Posterior cingulate gyrus (tissue), 11 donors: ENCODE measurements at regions of chr16 and their contacts with region 1.

Region 1: DNA sequence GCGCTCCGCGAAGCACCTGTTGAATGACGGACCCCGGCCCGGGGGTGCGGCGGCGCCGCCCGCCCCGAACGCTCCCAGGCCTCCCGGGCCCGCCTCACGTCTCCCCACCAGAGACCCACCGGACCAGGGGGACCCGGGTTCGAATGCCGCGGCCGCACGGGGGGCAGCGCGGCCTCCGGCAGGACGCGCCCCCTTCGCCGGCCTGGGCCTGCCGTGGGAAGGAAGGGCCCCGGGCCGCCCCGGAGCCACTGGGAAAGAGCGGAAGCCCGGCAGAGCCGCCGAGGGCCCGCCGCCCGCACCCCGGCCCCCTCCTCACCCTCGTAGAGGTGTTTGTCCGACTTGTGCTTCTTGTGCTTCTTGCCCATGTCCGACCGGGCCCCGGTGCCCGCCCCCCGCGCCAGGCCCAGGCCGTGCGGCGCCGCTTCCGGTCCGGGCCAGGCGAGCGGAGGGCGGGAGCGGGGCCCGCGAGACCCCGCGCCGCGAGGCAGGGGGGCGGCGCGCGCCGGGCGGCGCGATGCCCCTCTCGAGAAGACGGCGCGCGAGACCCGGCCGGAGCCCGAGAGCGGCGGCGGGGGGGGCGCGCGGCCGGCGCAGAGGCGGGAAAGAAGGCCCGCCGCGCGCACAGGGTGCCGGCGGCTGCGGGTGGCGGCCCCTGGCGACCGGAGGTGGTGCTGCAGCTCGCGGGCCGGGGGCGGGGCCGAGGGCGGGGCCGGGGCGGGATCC is at the start of gene BRD7:
- DNase-seq: peak in 9 of 10 donors; percentile 34 to 93 (median 59)

Region 2: DNA sequence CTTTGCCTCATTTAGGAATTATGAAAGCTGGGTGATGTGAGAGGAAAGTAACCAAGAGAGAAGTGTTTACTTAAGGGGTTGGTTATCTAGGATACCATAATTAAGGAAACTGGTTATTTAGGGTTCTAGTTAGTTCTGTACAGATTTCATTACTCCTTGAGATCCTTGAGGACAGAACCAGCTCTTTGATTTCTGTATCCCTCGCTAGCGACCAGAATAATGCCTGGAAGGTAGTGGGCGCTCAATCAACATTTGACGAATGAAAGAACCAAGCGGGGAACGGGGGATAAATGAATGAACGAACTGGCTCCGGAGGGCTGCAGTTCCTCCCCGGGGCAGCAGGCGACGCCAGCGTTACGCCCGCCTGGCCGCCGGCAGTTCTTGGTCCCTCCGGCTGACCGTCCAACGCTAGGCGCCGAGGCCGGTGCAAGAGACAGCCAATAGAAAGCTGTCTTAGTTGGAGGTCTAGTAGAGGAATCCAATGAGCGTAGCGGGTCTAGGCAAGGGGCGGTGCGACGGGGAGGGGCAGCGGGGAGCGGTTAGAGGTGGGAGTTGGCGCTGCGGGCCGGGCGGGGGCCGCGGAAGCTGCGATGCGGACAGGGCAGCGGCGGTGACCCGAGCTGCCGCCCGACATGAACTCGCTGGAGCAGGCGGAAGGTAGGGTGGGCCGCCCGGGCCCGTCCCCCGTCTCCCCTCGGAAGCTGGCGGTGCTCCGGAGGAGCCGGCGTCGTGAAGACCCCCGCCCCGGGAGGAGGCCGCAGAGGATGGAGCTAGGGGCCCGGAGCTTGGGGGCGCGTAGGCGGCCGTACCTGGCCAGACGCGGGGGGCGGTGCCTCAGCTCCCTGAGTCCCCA is 343.7 kb before region 1 on chr16 and contains the start of gene CNEP1R1:
- intact Hi-C with region 1: loop called (anchors 10 kb)
- DNase-seq: peak; percentile 89 to 99 (median 92)

Region 3: DNA sequence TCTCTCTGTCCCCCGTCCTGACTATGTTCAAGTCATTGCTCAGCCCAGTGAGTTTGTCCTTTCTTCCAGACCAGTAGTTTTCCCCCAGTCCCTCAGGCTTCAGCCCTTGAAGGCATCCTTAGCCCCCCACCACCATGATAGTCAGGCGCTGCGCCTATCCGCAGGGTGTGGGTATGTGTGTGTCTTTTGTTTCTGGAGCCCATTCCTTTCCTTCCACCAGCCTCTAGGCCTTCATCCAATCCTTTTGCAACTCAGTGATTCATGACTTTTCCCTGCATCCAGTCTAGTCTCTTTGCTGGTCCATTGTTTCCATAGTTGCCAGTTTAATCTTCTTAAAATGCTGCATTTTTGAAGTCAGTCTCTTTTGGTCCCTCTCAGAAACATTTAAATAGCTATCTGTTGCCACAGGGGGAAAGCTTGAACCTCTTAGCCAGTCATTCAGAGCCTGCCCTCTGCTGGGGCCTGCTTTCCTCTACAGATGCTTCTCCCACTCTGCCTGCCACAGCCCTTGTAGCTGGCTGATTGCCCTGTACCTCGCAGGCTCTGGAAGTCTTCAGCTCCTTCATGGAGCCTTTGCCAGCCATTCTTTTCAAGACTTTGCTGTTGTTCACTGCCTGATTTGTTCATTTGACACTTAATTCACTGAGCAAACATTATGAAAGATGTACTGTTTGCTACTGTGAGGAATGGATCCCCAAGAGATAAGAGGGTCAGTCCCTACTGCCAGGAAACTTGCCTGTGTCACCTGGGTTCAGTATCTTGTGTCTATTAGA is 158.1 kb before region 1 on chr16:
- intact Hi-C with region 1: loop called (anchors 10 kb)
- DNase-seq: peak; percentile 35 to 96 (median 78)

Region 4: GRCh38 chr16:50467943-50468760 is 99.6 kb after region 1 on chr16:
- intact Hi-C with region 1: no loop called
- DNase-seq: peak in 5 of 10 donors; percentile 19 to 87 (median 58)

Region 5: GRCh38 chr16:50665128-50665878 is 296.7 kb after region 1 on chr16:
- intact Hi-C with region 1: loop called (anchors 1 kb)
- DNase-seq: peak; percentile 61 to 95 (median 84)

Region 6: DNA sequence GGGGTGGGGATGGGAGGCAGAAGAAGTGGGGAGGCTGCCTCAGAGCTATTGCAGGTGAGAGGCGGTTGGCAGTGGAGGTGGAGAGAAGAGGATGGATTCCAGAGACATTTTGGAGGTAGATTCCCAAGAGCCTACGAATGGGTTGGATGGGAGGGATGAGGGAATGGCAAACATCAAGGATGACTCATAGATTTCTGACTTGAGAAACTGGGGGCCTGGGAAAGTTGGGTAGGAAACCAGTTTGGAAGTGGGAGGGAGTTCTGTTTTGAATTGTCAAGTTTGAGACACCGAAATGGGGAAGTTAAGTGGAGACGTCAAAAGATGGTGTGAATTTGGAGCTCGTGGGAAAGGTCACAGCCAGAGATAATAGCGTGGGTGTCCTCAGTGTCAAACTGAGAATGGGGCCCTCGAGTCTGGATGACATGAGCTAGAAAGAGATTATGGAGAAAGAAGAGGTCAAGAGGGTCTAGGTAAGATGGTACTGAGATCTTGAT is 367.1 kb after region 1 on chr16:
- intact Hi-C with region 1: no loop called
- DNase-seq: no peak

Region 7: GRCh38 chr16:50806099-50807062 is 437.8 kb after region 1 on chr16:
- intact Hi-C with region 1: loop called (anchors 2 kb)
- DNase-seq: peak; percentile 73 to 97 (median 88)